ENCODE measurements at regions of chr11 and their contacts with region 1.

Region 1: DNA sequence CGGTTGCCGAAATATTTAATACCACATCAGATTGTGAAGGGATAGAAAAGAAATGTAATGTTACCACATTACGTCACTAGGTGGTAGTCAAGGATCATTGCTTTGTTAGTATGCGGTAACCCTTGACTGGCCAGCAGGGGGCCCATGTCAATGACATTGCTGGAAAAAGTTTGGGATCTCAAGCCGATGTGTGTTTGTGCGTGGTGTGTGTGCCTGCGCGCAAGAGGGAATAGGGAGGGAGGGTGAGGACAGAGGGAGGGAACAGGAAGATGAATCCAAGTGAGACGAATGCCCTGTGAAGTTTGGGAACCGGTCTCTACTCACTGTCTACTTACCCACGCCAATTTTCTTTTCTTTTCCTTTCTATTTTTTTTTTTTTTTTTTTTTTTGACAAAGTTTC is 10.7 kb upstream of the MRGPRX2 start:
- DNase-seq: peak; percentile 65 to 77
- H3K4me3 ChIP-seq: peak overlapping the region; percentile 39; the same call in 1 of the 2 replicates
- H3K27ac ChIP-seq: no peak overlapping the region
- H3K4me1 ChIP-seq: peaks cover 30% of the 10 kb centered on the region
- H3K27me3 ChIP-seq: no peaks in the 10 kb centered on the region
- CTCF ChIP-seq: peak; percentile 99

Region 2: DNA sequence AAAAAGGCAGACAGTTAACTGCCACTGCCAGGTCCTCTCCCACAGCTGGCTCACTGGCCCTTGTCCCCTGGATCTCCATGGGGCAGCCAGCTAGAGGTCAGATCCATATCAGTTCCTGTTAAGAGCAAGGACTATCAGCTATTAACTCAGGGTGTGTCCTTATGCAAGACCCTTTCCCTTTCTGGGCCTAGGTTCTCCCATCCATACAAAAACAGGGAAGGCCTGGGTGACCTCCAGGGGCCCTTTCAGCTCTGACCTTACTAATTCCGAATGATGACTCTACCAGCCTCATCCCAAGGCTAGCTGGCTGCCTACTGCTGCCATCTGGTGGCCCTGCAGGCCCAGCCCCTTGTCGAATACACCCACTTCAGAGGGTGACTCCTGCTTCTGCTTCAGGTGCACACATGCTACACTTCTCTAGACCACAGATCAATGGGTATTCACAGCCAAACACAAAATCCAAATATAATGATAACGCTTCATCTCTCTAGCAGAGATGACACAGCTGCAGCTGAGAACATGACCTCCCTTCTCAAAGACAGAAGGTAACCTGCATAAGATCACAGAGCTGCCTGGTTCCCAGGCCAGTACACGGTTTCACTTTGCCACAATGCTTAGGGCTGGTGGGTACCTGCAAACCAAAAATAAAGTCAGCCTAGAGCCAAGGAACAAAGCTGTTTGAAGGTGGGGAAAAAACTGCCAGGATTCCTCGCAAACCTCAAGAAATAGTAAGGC is 1092.5 kb before region 1 on chr11:
- CTCF ChIA-PET with region 1: no interaction called
- POLR2A ChIA-PET with region 1: no interaction called
- intact Hi-C with region 1: loop called (anchors 1 kb)
- DNase-seq: peak; percentile 48 to 58
- H3K4me3 ChIP-seq: no peak overlapping the region
- H3K27ac ChIP-seq: no peak overlapping the region
- H3K4me1 ChIP-seq: no peaks in the 10 kb centered on the region
- H3K27me3 ChIP-seq: no peaks in the 10 kb centered on the region
- CTCF ChIP-seq: peak; percentile 82

Region 3: DNA sequence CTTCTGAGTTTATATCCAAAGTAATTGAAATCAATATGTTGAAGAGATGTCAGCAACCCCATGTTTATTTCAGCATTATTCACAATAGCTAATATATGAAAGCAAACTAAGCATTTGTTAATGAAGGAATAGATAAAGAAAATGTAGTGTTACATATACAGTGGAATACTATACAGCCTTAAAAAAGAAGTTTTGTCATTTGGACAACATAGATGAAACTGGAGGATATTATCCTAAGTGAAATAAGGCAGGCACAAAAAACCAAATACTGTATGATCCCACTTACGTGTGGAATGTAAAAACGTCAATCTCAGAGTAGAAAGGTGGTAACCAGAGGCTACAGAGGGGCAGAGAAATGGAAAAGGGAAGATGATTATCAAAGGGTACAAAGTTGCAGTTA is 21.0 kb before region 1 on chr11:
- CTCF ChIA-PET with region 1: no interaction called
- POLR2A ChIA-PET with region 1: no interaction called
- intact Hi-C with region 1: no loop called
- DNase-seq: no peak
- H3K4me3 ChIP-seq: no peak overlapping the region
- H3K27ac ChIP-seq: no peak overlapping the region
- H3K4me1 ChIP-seq: 0 out of 2 replicates have a peak, but pooled peaks cover 8% of the 10 kb centered on the region
- H3K27me3 ChIP-seq: no peaks in the 10 kb centered on the region; the same call in 1 of the 2 replicates
- CTCF ChIP-seq: no peak

Region 4: GRCh38 chr11:19253153-19253745 is 182.0 kb after region 1 on chr11:
- CTCF ChIA-PET with region 1: interaction called, 11 read pairs
- POLR2A ChIA-PET with region 1: no interaction called
- intact Hi-C with region 1: no loop called
- DNase-seq: no peak
- H3K4me3 ChIP-seq: no peak overlapping the region
- H3K27ac ChIP-seq: no peak overlapping the region
- H3K4me1 ChIP-seq: no peaks in the 10 kb centered on the region
- H3K27me3 ChIP-seq: no peaks in the 10 kb centered on the region
- CTCF ChIP-seq: no peak

Region 5: DNA sequence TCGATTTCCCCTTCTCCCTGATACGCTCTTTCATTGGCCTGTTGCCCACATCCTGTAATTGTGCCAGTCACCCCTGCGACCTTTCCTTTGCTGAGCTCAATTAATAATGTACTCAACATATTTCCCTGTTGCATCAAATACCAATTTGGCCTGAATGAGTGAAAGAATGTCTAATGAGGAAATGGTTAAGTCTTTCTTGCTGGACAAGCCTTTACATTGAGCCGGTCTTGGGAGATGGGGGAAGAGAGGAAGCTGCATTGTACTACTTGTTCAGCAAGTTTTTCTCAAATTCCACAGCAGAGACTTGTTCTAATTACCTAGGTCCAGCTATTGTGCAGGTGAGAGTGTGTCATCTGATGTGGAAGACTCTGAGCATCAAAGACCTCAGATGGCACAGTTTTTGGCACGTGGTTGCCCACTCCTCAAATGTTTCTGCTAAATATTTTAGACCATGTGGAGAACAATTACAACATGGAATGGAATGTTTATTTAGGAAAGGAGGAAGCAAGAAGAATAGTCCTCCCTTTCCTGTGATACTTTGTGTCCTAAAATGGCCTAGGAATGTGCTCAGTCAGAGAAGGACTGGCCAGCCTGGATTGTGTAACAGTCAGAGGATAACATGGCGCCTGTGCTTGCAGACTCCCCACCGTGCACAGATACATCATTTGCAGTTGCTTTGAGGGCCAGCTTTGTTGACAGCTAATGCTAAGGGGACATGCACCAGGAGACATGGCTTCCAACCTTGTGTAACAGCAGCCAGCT is 299.0 kb after region 1 on chr11:
- CTCF ChIA-PET with region 1: no interaction called
- POLR2A ChIA-PET with region 1: no interaction called
- intact Hi-C with region 1: loop called (anchors 1 kb)
- DNase-seq: peak; percentile 56 to 100
- H3K4me3 ChIP-seq: no peak overlapping the region
- H3K27ac ChIP-seq: peak overlapping the region; percentile 81
- H3K4me1 ChIP-seq: peaks cover 82% of the 10 kb centered on the region
- H3K27me3 ChIP-seq: no peaks in the 10 kb centered on the region
- CTCF ChIP-seq: no peak

Region 6: GRCh38 chr11:19742588-19743292 is 671.5 kb after region 1 on chr11:
- CTCF ChIA-PET with region 1: no interaction called
- POLR2A ChIA-PET with region 1: no interaction called
- intact Hi-C with region 1: loop called (anchors 5 kb)
- DNase-seq: peak; percentile 61 to 79
- H3K4me3 ChIP-seq: no peak overlapping the region
- H3K27ac ChIP-seq: no peak overlapping the region
- H3K4me1 ChIP-seq: peaks cover 6% of the 10 kb centered on the region; the same call in 1 of the 2 replicates
- H3K27me3 ChIP-seq: no peaks in the 10 kb centered on the region
- CTCF ChIP-seq: peak; percentile 94

Region 7: DNA sequence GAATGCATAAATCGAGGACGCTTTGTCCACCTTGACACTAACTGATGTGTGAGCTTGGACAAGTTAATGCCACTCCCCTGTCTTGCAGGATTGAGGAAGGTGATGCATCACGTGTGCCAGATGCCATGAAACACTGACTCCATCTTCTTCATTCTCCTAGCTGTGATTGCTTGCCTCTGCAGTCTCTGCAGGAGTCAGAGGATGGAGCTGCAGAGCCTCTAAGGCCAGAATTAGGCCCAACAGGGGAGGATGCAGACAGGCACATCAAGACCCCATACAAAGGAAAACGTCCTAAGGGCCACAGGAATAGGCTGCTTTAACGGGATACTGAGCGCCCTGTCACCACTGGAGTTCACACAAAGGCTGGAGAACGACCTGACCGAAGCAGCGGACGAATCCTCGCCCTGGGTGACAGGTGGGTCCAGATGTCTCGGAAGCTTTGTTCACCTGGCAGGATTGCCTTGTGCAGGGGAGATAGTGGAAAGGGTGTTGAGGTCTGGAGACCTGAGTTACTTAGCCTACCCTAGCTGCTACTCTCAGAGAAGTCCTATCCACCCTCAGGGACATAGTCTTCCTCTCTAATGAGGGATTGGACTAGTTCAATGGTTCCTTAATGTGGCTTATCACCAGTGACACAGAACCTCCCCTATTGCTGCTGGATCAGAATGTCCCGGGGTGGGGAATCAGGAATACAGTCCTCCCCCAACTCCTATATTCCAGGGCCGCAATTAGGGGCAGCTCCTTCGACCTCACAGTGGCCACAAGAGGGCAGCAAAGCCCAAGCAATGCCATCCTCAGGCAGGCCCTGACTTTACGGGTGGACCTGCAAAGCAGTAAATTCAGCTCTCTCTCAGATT is 1056.6 kb after region 1 on chr11:
- CTCF ChIA-PET with region 1: no interaction called
- POLR2A ChIA-PET with region 1: no interaction called
- intact Hi-C with region 1: loop called (anchors 2 kb)
- DNase-seq: peak; percentile 51 to 72
- H3K4me3 ChIP-seq: no peak overlapping the region
- H3K27ac ChIP-seq: no peak overlapping the region
- H3K4me1 ChIP-seq: no peaks in the 10 kb centered on the region
- H3K27me3 ChIP-seq: no peaks in the 10 kb centered on the region
- CTCF ChIP-seq: peak; percentile 93